ENCODE measurements at regions of chr12 and their contacts with region 1.

Region 1: GRCh38 chr12:53757095-53757770 is 5.5 kb upstream of the CISTR start:
- DNase-seq: peak; percentile 79
- H3K4me3 ChIP-seq: no peak overlapping the region; a peak in 1 of 4 replicates
- H3K27ac ChIP-seq: no peak overlapping the region
- H3K4me1 ChIP-seq: peaks cover 2 to 9% of the 10 kb centered on the region in 2 experiments; a peak in 1 of 4 replicates
- H3K27me3 ChIP-seq: peaks cover 87% of the 10 kb centered on the region
- CTCF ChIP-seq: peak; percentile 81
- EP300 ChIP-seq: no peak
- RAD21 ChIP-seq: peak; percentile 35

Region 2: GRCh38 chr12:53625946-53626701 is 131.1 kb before region 1 on chr12 and contains the start of gene ATF7:
- CTCF ChIA-PET with region 1: no interaction called
- POLR2A ChIA-PET with region 1: no interaction called
- DNase-seq: peak; percentile 93
- H3K4me3 ChIP-seq: peak within 1 kb of the TSS; percentile 75 to 77
- H3K27ac ChIP-seq: peak within 1 kb of the TSS; percentile 91 to 96
- H3K4me1 ChIP-seq: peaks cover 5% of the 10 kb centered on the region in 2 experiments; a peak in 3 of 4 replicates
- H3K27me3 ChIP-seq: no peaks in the 10 kb centered on the region
- CTCF ChIP-seq: no peak
- EP300 ChIP-seq: no peak; a peak in 2 of 4 replicates
- RAD21 ChIP-seq: peak; percentile 23; the same call in 1 of the 2 replicates
- polyA plus RNA-seq, gene ATF7: 12.8 and 17.3 TPM in 2 replicates

Region 3: DNA sequence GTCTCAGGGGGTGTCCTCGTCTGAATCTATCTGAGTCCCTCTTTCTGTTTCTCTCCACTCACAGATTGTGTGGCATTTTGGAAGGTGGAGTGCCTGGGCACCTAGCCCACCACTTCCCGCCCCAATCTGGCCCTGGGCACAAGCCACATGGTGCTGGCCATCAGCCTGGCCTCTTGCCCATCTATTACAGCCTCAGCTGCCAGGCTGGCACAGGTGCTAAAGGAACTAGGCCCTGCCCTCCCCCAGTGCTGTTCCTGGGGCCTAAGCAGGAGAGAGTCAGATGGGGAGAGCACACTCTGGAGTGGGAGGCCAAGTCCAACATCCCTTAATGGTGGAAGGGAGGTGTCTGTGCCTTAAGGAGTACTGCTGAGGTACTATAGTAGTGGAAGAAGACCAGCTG is 21.7 kb before region 1 on chr12:
- CTCF ChIA-PET with region 1: interaction called, 12 read pairs
- POLR2A ChIA-PET with region 1: no interaction called
- DNase-seq: no peak
- H3K4me3 ChIP-seq: no peak overlapping the region
- H3K27ac ChIP-seq: no peak overlapping the region
- H3K4me1 ChIP-seq: peaks cover 0 to 8% of the 10 kb centered on the region in 2 experiments; a peak in 1 of 4 replicates
- H3K27me3 ChIP-seq: peaks cover 57% of the 10 kb centered on the region
- CTCF ChIP-seq: no peak
- EP300 ChIP-seq: no peak
- RAD21 ChIP-seq: no peak

Region 4: DNA sequence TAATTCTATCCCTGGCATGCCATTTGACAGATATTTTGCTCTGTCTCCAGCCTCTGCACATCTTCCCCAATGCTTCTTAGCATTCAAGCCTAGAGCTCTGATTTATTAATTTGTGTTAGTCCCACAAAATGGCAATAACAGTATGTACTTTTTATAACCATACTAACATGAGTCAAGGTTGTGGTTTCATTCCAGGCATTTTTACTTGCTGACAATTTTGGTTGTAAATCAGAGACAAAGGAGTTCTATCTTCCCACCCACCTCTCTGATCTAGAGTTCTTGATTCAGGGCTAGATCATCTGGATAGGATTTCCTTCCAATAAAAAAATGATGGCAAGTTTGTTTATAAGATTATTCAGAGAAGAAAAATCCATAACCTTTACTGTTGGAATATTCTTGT is 13.0 kb after region 1 on chr12:
- CTCF ChIA-PET with region 1: interaction called, 20 read pairs
- POLR2A ChIA-PET with region 1: no interaction called
- DNase-seq: no peak
- H3K4me3 ChIP-seq: 0 out of 4 replicates have a peak overlapping the region, but pooled peaks of 1 of the 2 experiments have one; percentile 17
- H3K27ac ChIP-seq: peak overlapping the region in 1 of 2 experiments; percentile 38; a peak in 2 of 4 replicates
- H3K4me1 ChIP-seq: peaks cover 0 to 7% of the 10 kb centered on the region in 2 experiments; a peak in 2 of 4 replicates
- H3K27me3 ChIP-seq: peaks cover 24% of the 10 kb centered on the region
- CTCF ChIP-seq: no peak
- EP300 ChIP-seq: peak in 1 of 2 experiments; percentile 66; a peak in 1 of 4 replicates
- RAD21 ChIP-seq: no peak

Measured in SK-N-SH (cell line).